HepG2 (cell line): ENCODE measurements at regions of chr17 and their contacts with region 1.

Region 1: GRCh38 chr17:17440010-17440843 is 36.6 kb upstream of the MED9 start:
- DNase-seq: peak; percentile 77
- ATAC-seq: peak; percentile 67
- H3K4me3 ChIP-seq: peak overlapping the region in 1 of 3 experiments; percentile 32; a peak in 1 of 6 replicates
- H3K27ac ChIP-seq: peak overlapping the region; percentile 42
- H3K4me1 ChIP-seq: peaks cover 60% of the 10 kb centered on the region
- H3K27me3 ChIP-seq: no peaks in the 10 kb centered on the region
- CTCF ChIP-seq: peak; percentile 81
- EP300 ChIP-seq: 0 out of 4 replicates have a peak, but pooled peaks of 1 of the 2 experiments have one; percentile 23
- POLR2A ChIP-seq: no peak
- RAD21 ChIP-seq: peak; percentile 67

Region 2: DNA sequence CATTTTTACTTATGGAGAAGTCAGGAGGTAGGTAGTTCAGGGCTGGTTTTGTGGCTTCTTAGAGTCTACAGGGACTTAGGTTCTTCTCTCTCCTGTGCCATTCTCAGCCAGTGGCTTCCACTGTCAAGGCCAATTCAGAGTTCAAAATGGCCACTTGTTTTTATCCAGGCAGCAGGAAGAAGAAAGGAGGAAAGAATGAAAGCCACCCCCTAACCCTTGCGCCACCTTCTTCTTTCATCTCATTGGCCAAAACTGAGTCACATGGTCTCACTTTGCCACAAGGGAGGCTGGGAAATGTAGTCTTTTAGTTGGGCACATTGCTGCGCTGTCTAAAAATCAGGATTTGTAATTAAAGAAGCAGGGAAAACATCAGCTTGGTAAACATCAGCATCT is 24.2 kb before region 1 on chr17:
- CTCF ChIA-PET with region 1: no interaction called
- POLR2A ChIA-PET with region 1: interaction called, 44 read pairs
- in situ Hi-C with region 1: no loop called
- intact Hi-C with region 1: no loop called
- DNase-seq: peak; percentile 91
- ATAC-seq: peak; percentile 73
- H3K4me3 ChIP-seq: no peak overlapping the region
- H3K27ac ChIP-seq: peak overlapping the region; percentile 82
- H3K4me1 ChIP-seq: peaks cover 50% of the 10 kb centered on the region
- H3K27me3 ChIP-seq: no peaks in the 10 kb centered on the region
- CTCF ChIP-seq: no peak
- EP300 ChIP-seq: no peak
- POLR2A ChIP-seq: no peak
- RAD21 ChIP-seq: no peak

Region 3: DNA sequence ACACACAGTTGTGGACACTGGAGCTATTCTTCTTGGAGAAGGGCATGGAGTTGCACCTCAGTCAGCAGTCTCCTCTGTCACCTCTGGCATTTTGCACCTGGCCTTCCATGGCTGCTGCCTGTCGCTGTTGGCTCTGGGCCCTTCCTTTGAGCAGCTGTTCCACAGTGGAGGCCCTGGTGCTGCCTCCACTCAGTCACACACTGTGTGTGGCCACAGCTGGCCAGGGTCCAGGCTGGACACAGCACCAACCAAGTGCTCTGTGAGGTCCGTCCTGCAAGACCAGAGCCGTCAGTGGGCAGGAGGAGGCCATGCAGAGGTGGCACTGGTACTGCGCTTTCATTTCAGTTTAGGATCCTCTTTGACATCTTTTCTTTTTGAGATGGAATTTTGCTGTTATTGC is 14.9 kb after region 1 on chr17:
- CTCF ChIA-PET with region 1: no interaction called
- POLR2A ChIA-PET with region 1: no interaction called
- in situ Hi-C with region 1: no loop called
- intact Hi-C with region 1: no loop called
- DNase-seq: no peak
- ATAC-seq: no peak
- H3K4me3 ChIP-seq: no peak overlapping the region
- H3K27ac ChIP-seq: no peak overlapping the region
- H3K4me1 ChIP-seq: peaks cover 34% of the 10 kb centered on the region
- H3K27me3 ChIP-seq: 0 out of 5 replicates have a peak, but pooled peaks cover 0 to 9% of the 10 kb centered on the region in 2 experiments
- CTCF ChIP-seq: no peak
- EP300 ChIP-seq: no peak
- POLR2A ChIP-seq: no peak
- RAD21 ChIP-seq: no peak

Region 4: DNA sequence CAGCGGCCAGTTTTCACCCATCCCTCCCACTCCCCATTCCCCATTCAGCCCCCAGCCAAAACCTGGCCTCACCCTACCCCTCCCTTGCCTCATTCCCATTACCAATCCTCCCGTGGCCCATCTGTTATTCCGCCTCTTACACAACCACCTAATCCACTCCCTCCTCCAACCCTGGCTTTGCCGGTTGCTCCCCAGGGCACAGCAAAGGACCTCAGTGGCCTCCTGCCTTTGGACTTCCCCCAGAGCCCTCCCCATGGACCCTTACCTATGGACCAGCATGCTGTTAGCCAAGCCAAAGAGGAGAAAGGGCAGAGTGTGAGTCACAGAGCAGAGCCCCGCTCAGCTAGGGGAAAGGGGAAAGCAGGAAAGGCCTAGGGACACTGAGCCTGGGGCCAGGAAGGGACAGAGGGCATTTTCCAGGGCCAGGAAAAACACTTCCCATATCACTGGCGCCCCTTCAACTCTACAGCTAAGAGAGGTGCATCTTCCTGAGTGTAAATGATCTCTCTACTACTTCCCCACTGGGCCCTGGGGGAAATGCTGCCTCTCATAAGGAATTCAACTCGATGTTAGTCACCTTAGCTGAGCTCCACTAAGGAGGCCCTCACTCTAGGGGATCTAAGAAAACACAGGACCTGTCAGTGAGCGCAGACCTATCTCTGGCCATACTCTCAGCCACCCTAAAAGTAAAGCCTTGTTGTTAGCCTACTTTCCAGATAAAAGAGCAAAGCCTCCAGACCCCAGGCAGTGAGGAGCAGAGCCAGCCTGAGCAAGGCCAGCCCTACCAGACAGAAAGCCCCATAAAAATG is 140.6 kb after region 1 on chr17:
- CTCF ChIA-PET with region 1: no interaction called
- POLR2A ChIA-PET with region 1: no interaction called
- in situ Hi-C with region 1: no loop called
- intact Hi-C with region 1: no loop called
- DNase-seq: peak; percentile 77
- ATAC-seq: peak; percentile 96
- H3K4me3 ChIP-seq: peak overlapping the region in 1 of 3 experiments; percentile 55; a peak in 2 of 6 replicates
- H3K27ac ChIP-seq: peak overlapping the region; percentile 94
- H3K4me1 ChIP-seq: peaks cover 59% of the 10 kb centered on the region
- H3K27me3 ChIP-seq: no peaks in the 10 kb centered on the region
- CTCF ChIP-seq: peak; percentile 32; the same call in 1 of the 2 replicates
- EP300 ChIP-seq: peak in 1 of 2 experiments; percentile 74; a peak in 2 of 4 replicates
- POLR2A ChIP-seq: peak; percentile 51 to 59; a peak in 2 of 4 replicates
- RAD21 ChIP-seq: no peak